GM10248 (cell line): ENCODE measurements at regions of chr13 and their contacts with region 1.

Region 1: GRCh38 chr13:60448907-60449510 is 52.0 kb downstream of the TDRD3 start:
- DNase-seq: peak; percentile 22
- CTCF ChIP-seq: peak; percentile 76

Region 2: DNA sequence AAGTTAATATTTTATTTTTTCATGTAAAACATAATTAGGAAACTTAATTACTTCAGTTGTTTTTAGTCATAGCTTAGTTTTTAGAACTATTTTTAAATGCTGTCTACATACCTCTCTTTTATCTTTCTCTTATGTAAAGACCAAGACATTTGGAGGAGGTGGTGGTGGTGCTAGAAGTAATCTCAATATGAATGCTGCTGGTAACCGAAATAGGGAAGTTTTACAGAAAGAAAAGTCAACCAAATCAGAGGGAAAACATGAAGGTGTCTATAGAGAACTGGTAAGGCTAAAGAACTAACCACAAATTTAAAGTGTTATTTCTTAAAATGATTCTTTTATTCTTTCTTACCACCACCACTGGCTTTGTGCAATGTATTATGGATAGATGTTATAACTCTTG is 45.3 kb after region 1 on chr13:
- CTCF ChIA-PET with region 1: interaction called, 12 read pairs
- POLR2A ChIA-PET with region 1: no interaction called
- DNase-seq: peak; percentile 22
- CTCF ChIP-seq: no peak